BJ (cell line): ENCODE measurements at regions of chr5 and their contacts with region 1.

Region 1: DNA sequence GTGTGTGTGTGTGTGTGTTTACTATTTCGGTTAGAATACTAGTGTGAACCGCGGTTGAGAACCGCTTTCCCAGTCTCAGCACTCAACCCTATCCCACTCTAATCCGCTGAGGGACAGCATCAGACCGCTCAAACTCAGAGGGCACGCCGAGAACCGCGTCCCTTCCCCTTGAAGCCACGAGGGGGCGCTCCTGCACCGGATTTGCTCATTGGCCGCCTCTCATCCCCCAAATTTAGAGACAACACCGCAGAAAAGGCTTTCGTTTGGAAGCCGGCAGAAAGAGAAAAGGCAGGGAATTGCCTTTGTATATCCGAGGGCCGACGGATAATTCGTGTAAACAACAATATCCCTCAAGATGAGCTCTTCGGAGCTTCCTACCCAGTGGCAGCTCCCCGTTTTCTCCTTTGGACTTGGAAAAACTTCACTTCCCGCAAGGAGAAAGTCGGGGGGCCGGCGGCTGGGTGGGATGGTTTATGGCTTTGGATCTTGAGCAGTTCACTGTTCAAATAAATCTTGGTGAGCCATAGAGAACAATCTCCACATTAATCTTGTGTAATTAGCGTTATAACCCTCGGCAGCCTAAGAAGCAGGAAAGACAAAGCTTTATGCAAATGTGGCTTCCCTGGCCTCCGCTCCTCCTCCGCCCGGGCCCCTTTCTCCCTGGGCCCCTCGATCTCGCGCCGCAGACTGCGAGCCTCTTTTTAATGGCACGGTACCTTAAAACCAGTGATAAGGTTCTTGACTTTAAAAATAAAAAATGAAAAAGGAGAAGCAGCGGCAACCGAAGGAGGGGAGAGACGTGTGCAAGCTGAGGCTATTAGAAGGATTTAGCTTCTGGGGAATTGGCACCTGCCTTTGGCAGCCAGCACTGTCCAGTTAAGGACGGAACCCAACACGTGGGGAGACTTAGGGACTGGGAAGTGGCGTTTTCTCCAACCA is 296.8 kb downstream of the PARP8 start:
- DNase-seq: no peak
- H3K4me3 ChIP-seq: peak overlapping the region; percentile 39
- H3K27me3 ChIP-seq: peaks cover 36% of the 10 kb centered on the region
- CTCF ChIP-seq: peak; percentile 98

Region 2: DNA sequence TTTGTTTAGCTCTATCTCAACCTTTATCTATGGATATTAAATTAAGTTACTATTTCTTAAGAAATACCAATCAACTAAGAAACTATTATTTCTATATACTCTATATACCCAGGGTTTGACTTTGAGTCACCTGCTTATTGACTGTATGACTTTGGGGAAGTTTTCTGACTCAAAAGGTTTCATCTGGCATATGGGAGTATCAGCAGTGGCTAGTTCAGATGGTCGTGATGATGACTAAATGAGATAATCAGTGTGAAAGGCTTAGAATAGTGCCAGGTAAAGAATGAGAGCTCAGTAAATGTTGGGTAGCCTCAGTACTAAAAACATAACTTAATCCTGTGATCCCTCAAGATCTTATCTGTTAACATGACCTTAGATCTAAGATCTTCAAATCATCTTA is 240.4 kb after region 1 on chr5:
- CTCF ChIA-PET with region 1: no interaction called
- POLR2A ChIA-PET with region 1: no interaction called
- DNase-seq: no peak
- H3K4me3 ChIP-seq: no peak overlapping the region
- H3K27me3 ChIP-seq: no peaks in the 10 kb centered on the region
- CTCF ChIP-seq: no peak

Region 3: GRCh38 chr5:52007230-52007858 is 1044.1 kb after region 1 on chr5:
- CTCF ChIA-PET with region 1: interaction called, 12 read pairs
- POLR2A ChIA-PET with region 1: no interaction called
- DNase-seq: peak; percentile 1
- H3K4me3 ChIP-seq: no peak overlapping the region
- H3K27me3 ChIP-seq: no peaks in the 10 kb centered on the region
- CTCF ChIP-seq: peak; percentile 72

Region 4: DNA sequence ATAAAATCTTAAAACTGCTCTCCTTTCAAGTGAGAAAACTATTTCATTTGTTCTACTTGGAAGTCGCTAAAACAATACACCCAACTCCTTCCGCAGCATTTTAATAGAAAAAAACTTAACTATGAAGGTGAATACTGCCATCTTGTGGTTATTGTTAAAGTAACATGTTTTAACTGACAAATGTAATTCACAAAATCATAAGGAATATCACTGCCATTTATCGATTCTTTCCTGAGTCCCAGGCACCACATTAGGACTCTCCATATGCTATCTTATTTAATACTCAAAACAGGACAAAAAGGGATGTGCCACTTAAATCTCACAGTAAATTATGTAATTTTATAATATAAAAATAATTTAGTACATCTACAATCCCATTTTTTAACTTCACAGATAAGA is 1694.0 kb after region 1 on chr5:
- CTCF ChIA-PET with region 1: interaction called, 11 read pairs
- POLR2A ChIA-PET with region 1: no interaction called
- DNase-seq: no peak
- H3K4me3 ChIP-seq: no peak overlapping the region
- H3K27me3 ChIP-seq: 0 out of 2 replicates have a peak, but pooled peaks cover 4% of the 10 kb centered on the region
- CTCF ChIP-seq: peak; percentile 40

Region 5: DNA sequence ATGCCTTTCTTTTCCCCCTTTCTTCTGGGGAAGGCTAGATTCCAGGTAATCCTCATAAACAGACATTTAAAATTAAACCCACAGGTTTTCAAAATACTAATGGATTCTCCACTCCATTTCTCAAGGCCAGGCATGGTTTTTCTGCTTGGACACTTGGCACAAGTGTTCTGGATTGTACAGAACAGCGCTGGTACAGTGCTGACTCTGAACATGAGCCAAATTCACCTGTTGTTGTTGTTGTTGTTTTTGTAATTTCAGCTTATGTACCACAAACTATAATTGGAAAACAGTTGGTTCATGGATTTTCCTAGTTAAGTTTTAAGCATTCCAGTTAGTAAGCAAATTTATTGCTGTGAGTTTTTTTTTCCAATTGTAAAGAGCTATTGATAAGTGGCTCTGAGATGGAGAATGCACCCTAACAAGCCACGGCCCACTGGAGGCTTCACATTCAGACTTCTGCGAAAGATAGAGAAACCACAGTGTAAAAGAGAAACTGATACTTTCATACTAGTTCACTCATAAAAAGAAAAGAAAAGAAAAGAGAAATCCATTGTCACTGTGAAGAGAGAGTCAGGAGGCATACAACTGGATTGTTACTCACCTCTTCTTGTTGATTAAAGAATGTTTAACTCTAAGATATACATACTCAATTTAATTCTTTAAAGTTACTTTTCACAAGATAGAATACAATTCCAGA is 1808.3 kb after region 1 on chr5:
- CTCF ChIA-PET with region 1: no interaction called
- POLR2A ChIA-PET with region 1: no interaction called
- DNase-seq: no peak
- H3K4me3 ChIP-seq: no peak overlapping the region
- H3K27me3 ChIP-seq: 0 out of 2 replicates have a peak, but pooled peaks cover 1% of the 10 kb centered on the region
- CTCF ChIP-seq: no peak